Common myeloid progenitor, CD34-positive (primary cell): ENCODE measurements at regions of chr10 and their contacts with region 1.

Region 1: GRCh38 chr10:114304017-114304570 is 65.0 kb downstream of the VWA2 start:
- DNase-seq: peak; percentile 81 to 88 (median 84)
- H3K4me3 ChIP-seq: peak overlapping the region; percentile 51 to 96 (median 79)
- H3K27ac ChIP-seq: peak overlapping the region in 1 of 2 experiments; percentile 39
- H3K4me1 ChIP-seq: peaks cover 5 to 13% (median 10%) of the 10 kb centered on the region in 4 experiments
- H3K27me3 ChIP-seq: peaks cover 0 to 3% (median 0%) of the 10 kb centered on the region in 5 experiments

Region 2: DNA sequence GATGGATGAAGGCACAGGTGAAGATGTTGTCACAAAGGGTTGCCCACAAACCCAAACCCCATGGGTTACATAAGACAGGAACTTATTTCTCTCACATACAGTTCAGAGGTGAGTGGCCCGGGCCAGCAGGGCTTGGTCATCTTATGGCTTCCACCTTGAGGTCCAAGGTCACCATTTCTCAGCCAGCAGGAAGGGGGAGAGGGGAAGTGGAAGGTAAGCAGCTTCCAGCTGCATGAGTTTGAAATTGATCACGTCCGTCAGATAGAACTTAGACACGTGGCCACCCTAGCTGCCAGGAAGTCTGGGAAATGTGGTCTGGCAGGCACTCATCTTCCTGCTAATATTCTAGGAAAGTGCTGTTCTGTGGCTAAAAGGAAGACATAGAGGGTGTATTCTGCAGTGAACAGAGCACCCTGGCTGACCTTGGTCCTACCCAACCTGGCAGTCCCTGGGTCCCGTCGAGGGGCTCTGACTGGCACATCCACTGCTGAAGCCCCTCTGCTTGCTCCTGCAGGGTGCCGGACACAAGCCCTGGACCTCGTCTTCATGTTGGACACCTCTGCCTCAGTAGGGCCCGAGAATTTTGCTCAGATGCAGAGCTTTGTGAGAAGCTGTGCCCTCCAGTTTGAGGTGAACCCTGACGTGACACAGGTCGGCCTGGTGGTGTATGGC is 15.5 kb before region 1 on chr10:
- CTCF ChIA-PET with region 1: interaction called, 14 read pairs
- POLR2A ChIA-PET with region 1: no interaction called
- DNase-seq: no peak
- H3K4me3 ChIP-seq: peak overlapping the region in 1 of 7 experiments; percentile 6
- H3K27ac ChIP-seq: no peak overlapping the region
- H3K4me1 ChIP-seq: peaks cover 0 to 11% (median 6%) of the 10 kb centered on the region in 4 experiments
- H3K27me3 ChIP-seq: no peaks in the 10 kb centered on the region

Region 3: GRCh38 chr10:114388275-114388674 is 84.2 kb after region 1 on chr10:
- CTCF ChIA-PET with region 1: interaction called, 16 read pairs
- POLR2A ChIA-PET with region 1: no interaction called
- DNase-seq: peak in 2 of 3 donors; percentile 41 to 43
- H3K4me3 ChIP-seq: no peak overlapping the region
- H3K27ac ChIP-seq: no peak overlapping the region
- H3K4me1 ChIP-seq: peaks cover 4 to 16% (median 10%) of the 10 kb centered on the region in 4 experiments
- H3K27me3 ChIP-seq: peaks cover 0 to 1% (median 0%) of the 10 kb centered on the region in 5 experiments

Region 4: GRCh38 chr10:114427124-114427852 is 123.2 kb after region 1 on chr10:
- CTCF ChIA-PET with region 1: interaction called, 79 read pairs
- POLR2A ChIA-PET with region 1: no interaction called
- DNase-seq: no peak
- H3K4me3 ChIP-seq: no peak overlapping the region
- H3K27ac ChIP-seq: no peak overlapping the region
- H3K4me1 ChIP-seq: no peaks in the 10 kb centered on the region
- H3K27me3 ChIP-seq: no peaks in the 10 kb centered on the region

Region 5: DNA sequence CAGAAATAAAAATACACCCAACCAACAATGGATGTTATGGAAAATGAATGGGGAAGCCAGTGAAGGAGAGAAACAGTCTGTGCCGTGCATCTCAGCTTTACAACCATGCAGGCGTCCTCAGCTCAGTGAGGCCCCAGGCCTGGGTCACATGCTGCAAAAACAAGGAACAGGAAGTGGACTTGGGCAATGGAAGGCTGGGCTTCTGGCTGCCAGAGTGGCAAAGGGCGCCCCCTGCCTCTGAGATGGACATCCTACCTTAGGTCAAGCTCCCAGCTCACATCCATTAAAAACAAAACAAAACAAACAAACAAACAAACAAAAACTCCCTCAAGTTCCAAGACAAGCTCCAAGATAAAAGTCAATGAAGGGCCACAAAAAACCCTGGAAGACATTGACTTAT is 154.9 kb after region 1 on chr10:
- CTCF ChIA-PET with region 1: interaction called, 17 read pairs
- POLR2A ChIA-PET with region 1: no interaction called
- DNase-seq: peak; percentile 55 to 71 (median 61)
- H3K4me3 ChIP-seq: no peak overlapping the region
- H3K27ac ChIP-seq: no peak overlapping the region
- H3K4me1 ChIP-seq: peaks cover 0 to 4% (median 1%) of the 10 kb centered on the region in 4 experiments
- H3K27me3 ChIP-seq: no peaks in the 10 kb centered on the region